Sigmoid colon (tissue), 7 donors: ENCODE measurements at regions of chr2 and their contacts with region 1.

Region 1: DNA sequence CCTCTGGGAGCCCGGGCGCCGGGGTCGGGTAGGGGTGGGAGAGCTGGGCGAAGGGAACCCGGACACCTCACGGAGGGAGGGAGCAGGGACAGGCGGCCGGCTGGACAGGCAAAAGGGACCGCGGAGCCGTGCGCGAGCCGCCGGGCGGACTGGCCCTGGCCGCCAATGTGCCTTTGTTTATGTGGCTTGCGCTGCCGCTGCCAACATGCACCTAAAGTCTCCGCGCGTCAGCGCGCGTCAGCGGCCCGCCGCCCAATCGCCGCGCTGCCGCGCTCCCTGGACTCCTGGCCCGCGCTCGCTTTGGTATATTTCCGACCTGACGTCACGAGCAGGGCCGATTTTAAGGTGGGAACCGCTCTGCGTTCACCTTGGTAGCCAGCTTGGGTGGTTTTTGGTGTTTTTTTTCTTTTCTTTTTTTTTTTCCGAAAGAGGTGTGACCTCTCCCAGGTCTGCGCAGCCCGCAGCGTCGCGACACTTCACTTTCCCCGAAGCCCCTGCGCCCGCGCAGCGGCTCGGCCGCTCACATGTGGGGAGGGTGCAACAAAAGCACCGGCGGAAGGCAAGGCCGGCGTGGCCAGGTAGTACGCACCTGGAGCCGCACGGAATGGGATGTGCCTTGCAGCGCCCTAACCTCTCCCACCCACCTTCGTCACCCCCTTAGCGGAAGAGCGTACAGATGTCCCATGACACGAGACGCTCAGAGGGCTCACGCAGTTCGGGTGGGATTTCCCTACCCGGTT is at the start of gene NR4A2:
- DNase-seq: peak; percentile 97
- H3K4me3 ChIP-seq: peak within 1 kb of the TSS; percentile 71 to 83 (median 74)
- H3K27ac ChIP-seq: peak within 1 kb of the TSS; percentile 98 to 100 (median 98)
- H3K4me1 ChIP-seq: peaks cover 0 to 32% (median 3%) of the 10 kb centered on the region in 4 donors
- H3K27me3 ChIP-seq: peaks cover 0 to 26% (median 0%) of the 10 kb centered on the region in 3 donors
- CTCF ChIP-seq: no peak
- EP300 ChIP-seq: peak; percentile 37 to 86 (median 72)
- POLR2A ChIP-seq: peak; percentile 71 to 89
- total RNA-seq, gene NR4A2: 1.8 to 5.0 (median 2.6) TPM

Region 2: GRCh38 chr2:156400706-156401678 is 68.3 kb after region 1 on chr2:
- intact Hi-C with region 1: loop called (anchors 2 kb)
- DNase-seq: peak; percentile 89
- H3K4me3 ChIP-seq: peak overlapping the region; percentile 60 to 73 (median 64)
- H3K27ac ChIP-seq: peak overlapping the region; percentile 89 to 94 (median 90)
- H3K4me1 ChIP-seq: peaks cover 3 to 8% (median 5%) of the 10 kb centered on the region in 4 donors
- H3K27me3 ChIP-seq: no peaks in the 10 kb centered on the region
- CTCF ChIP-seq: no peak
- EP300 ChIP-seq: no peak
- POLR2A ChIP-seq: no peak

Region 3: DNA sequence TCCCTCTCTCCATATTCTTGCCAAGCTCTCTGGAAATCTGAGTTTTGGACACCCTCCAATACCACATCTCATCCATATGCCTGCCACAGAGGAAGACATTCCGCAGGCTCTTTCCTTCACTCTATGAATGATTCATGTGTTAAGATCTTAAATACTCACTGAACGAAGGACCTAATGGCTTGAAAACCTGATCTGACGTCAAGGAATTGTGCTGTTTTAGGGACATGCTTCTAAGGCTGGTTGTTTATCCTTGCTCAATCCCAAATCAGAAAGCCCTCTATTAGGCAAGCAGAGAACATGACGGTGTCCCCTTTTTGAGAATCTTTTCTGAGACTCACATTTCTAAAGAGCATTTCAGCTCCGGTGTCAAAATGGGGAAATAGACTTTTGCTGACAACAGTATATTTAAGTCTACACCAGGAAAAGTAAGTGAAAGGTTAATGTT is 841.1 kb after region 1 on chr2:
- intact Hi-C with region 1: loop called (anchors 10 kb)
- DNase-seq: no peak
- H3K4me3 ChIP-seq: no peak overlapping the region
- H3K27ac ChIP-seq: peak overlapping the region in 3 of 4 donors; percentile 3 to 69 (median 45)
- H3K4me1 ChIP-seq: peaks cover 0 to 17% (median 11%) of the 10 kb centered on the region in 4 donors
- H3K27me3 ChIP-seq: no peaks in the 10 kb centered on the region
- CTCF ChIP-seq: no peak
- EP300 ChIP-seq: peak in 2 of 4 donors; percentile 5 to 14
- POLR2A ChIP-seq: no peak